Pancreas (tissue), 10 donors: ENCODE measurements at regions of chr16 and their contacts with region 1.

Region 1: GRCh38 chr16:1194665-1195392 is 30.2 kb downstream of the TPSG1 start:
- DNase-seq: peak in 2 of 6 donors; percentile 35 to 74
- ATAC-seq: peak; percentile 41 to 65 (median 54)
- H3K4me3 ChIP-seq: no peak overlapping the region
- H3K27ac ChIP-seq: no peak overlapping the region
- H3K4me1 ChIP-seq: no peaks in the 10 kb centered on the region
- H3K27me3 ChIP-seq: no peaks in the 10 kb centered on the region
- CTCF ChIP-seq: peak; percentile 78 to 96 (median 90)

Region 2: GRCh38 chr16:813204-813915 is 381.5 kb before region 1 on chr16:
- intact Hi-C with region 1: loop called in 1 of 3 experiments (anchors 10 kb)
- DNase-seq: peak in 2 of 6 donors; percentile 73 to 74
- ATAC-seq: peak; percentile 46 to 88 (median 75)
- H3K4me3 ChIP-seq: peak overlapping the region in 1 of 4 donors; percentile 15
- H3K27ac ChIP-seq: no peak overlapping the region
- H3K4me1 ChIP-seq: peaks cover 0 to 2% (median 0%) of the 10 kb centered on the region in 3 donors
- H3K27me3 ChIP-seq: peaks cover 0 to 22% (median 2%) of the 10 kb centered on the region in 4 donors
- CTCF ChIP-seq: peak in 3 of 4 donors; percentile 44 to 48 (median 45)

Region 3: DNA sequence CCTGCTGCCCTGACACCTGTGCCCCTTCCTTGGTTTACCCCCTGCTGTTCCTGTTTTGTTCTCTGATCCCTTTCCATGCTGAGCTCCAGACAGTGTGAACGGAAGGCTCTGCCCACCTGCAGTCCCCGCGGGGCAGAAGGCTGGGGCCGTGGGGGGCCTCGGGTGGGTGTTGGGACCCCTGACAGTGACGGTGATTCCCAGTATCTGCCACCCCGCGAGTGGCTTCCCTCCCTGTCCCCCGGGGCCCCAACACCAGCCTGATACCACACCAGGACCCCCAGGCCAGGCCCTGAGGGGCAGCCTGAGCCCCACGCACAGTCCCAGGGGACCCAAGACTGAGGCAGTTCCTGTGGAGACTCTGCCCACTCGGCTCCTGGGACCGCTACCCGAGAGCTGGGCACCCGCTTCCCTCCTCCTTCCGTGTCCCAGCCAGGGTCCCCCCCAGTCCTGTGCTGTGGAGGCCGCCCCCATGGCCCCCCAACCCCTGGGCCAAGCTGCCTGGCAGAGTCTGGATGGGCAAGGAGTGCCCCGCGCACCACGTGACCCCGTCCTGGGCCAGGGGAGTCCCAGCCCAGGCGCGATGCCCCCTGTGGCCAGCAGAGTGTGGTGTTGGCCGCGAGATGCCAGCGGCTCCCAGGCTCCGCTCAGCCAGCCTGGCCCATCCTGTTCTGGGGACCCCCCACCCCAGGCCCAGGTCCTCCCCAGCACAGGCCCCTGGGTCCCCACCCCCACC is 88.8 kb before region 1 on chr16:
- intact Hi-C with region 1: loop called in 2 of 3 experiments (anchors 1 to 2 kb)
- DNase-seq: peak; percentile 64 to 94 (median 84)
- ATAC-seq: peak; percentile 79 to 91 (median 88)
- H3K4me3 ChIP-seq: no peak overlapping the region
- H3K27ac ChIP-seq: no peak overlapping the region
- H3K4me1 ChIP-seq: no peaks in the 10 kb centered on the region
- H3K27me3 ChIP-seq: peaks cover 0 to 19% (median 0%) of the 10 kb centered on the region in 4 donors
- CTCF ChIP-seq: peak; percentile 79 to 88 (median 87)